ENCODE measurements at regions of chr7 and their contacts with region 1.

Region 1: DNA sequence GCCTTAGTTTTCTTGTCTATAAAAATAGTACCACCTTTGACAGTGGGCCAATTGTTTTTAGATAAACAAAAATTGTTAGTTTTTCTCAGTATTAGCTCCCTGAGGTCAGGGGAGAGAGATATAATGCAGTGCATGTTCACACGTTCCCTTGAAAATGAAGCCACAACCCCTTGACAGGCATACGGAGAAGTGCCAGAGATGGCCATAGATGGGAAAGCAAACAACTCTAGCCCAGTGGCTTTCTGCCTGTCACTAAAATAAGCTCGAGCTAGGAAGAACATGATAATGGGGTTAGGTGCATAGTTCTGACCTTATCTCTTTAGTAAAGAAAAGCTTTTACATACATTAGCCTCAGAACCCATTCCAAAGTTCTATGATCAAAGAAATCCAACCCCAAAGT is 124.9 kb downstream of the CHRM2 start:
- DNase-seq: no peak
- ATAC-seq: no peak
- H3K4me3 ChIP-seq: no peak overlapping the region
- H3K27ac ChIP-seq: peak overlapping the region; percentile 12; the same call in 1 of the 2 replicates
- H3K4me1 ChIP-seq: peaks cover 12% of the 10 kb centered on the region
- H3K27me3 ChIP-seq: no peaks in the 10 kb centered on the region
- CTCF ChIP-seq: no peak
- POLR2A ChIP-seq: no peak
- RAD21 ChIP-seq: no peak

Region 2: GRCh38 chr7:136883046-136883445 is 110.3 kb before region 1 on chr7:
- CTCF ChIA-PET with region 1: no interaction called
- POLR2A ChIA-PET with region 1: no interaction called
- dilution Hi-C with region 1: no loop called
- in situ Hi-C with region 1: no loop called
- intact Hi-C with region 1: no loop called
- DNase-seq: peak; percentile 52
- ATAC-seq: no peak
- H3K4me3 ChIP-seq: no peak overlapping the region
- H3K27ac ChIP-seq: peak overlapping the region; percentile 49; the same call in 1 of the 2 replicates
- H3K4me1 ChIP-seq: peaks cover 10% of the 10 kb centered on the region
- H3K27me3 ChIP-seq: no peaks in the 10 kb centered on the region
- CTCF ChIP-seq: peak; percentile 22; the same call in 1 of the 2 replicates
- POLR2A ChIP-seq: no peak
- RAD21 ChIP-seq: no peak

Region 3: GRCh38 chr7:136941816-136942215 is 51.6 kb before region 1 on chr7:
- CTCF ChIA-PET with region 1: no interaction called
- POLR2A ChIA-PET with region 1: no interaction called
- dilution Hi-C with region 1: no loop called
- in situ Hi-C with region 1: no loop called
- intact Hi-C with region 1: loop called (anchors 5 kb)
- DNase-seq: no peak
- ATAC-seq: no peak; the same call in 1 of the 2 replicates
- H3K4me3 ChIP-seq: no peak overlapping the region
- H3K27ac ChIP-seq: peak overlapping the region; percentile 26; the same call in 1 of the 2 replicates
- H3K4me1 ChIP-seq: peaks cover 16% of the 10 kb centered on the region
- H3K27me3 ChIP-seq: no peaks in the 10 kb centered on the region
- CTCF ChIP-seq: no peak
- POLR2A ChIP-seq: no peak
- RAD21 ChIP-seq: no peak

Measured in IMR-90 (cell line).